H1 (cell line): ENCODE measurements at regions of chr12 and their contacts with region 1.

Region 1: GRCh38 chr12:52063981-52064649 is 5.7 kb upstream of the ATG101 start:
- DNase-seq: no peak
- H3K4me3 ChIP-seq: no peak overlapping the region
- H3K27ac ChIP-seq: no peak overlapping the region
- H3K4me1 ChIP-seq: peaks cover 0 to 2% (median 0%) of the 10 kb centered on the region in 4 experiments; a peak in 3 of 7 replicates
- H3K27me3 ChIP-seq: peaks cover 0 to 2% (median 0%) of the 10 kb centered on the region in 4 experiments; a peak in 2 of 7 replicates
- CTCF ChIP-seq: no peak
- EP300 ChIP-seq: no peak
- POLR2A ChIP-seq: no peak
- RAD21 ChIP-seq: no peak

Region 2: DNA sequence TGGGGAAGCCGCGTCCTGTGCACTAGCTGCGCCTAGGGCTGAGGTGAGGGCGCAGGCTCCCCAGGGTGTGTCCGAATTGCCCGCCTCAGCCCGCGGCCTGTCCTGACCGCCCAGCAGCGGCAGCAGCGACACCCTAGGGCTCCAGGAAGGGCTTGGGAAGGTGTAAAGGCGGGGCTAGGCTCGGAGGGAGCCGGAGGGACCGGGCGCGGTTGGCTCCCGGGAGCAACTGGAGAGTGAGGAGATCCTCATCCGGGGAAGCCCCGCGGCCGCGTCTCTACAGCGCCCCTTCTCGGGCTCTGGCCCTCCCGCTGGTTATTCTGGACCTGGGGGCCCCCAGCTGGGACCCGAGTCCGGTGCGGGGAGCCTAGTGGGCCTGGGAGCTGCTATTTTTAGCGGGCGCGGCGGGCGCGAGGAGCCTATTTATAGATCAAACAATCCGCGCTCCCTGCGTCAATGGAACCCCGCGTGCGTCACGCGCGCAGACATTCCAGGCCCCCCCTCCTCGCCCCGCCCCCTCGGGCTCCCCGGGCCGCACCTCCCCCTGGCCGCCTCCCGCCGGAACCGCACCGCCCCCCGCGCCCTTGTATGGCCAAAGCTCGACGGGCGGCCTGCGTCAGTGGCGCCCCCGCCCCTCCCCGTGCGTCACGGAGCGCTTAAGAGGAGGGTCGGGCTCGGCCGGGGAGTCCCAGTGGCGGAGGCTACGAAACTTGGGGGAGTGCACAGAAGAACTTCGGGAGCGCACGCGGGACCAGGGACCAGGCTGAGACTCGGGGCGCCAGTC is 13.2 kb before region 1 on chr12 and contains the start of gene NR4A1:
- CTCF ChIA-PET with region 1: interaction called, 56 read pairs
- POLR2A ChIA-PET with region 1: interaction called, 14 read pairs
- DNase-seq: peak in 1 of 2 experiments; percentile 87
- H3K4me3 ChIP-seq: peak within 1 kb of the TSS; percentile 44 to 72 (median 64)
- H3K27ac ChIP-seq: no peak within 1 kb of the TSS
- H3K4me1 ChIP-seq: peaks cover 0 to 19% (median 9%) of the 10 kb centered on the region in 4 experiments; a peak in 6 of 7 replicates
- H3K27me3 ChIP-seq: peaks cover 4 to 44% (median 36%) of the 10 kb centered on the region in 4 experiments
- CTCF ChIP-seq: no peak
- EP300 ChIP-seq: 0 out of 3 replicates have a peak, but pooled peaks of 1 of the 2 experiments have one; percentile 7
- POLR2A ChIP-seq: no peak; a peak in 1 of 3 replicates
- RAD21 ChIP-seq: no peak
- total RNA-seq, gene NR4A1: 18.7 and 19.3 TPM in 2 replicates

Region 3: GRCh38 chr12:52313926-52314325 is 249.8 kb after region 1 on chr12:
- CTCF ChIA-PET with region 1: no interaction called
- POLR2A ChIA-PET with region 1: no interaction called
- DNase-seq: no peak
- H3K4me3 ChIP-seq: no peak overlapping the region
- H3K27ac ChIP-seq: no peak overlapping the region
- H3K4me1 ChIP-seq: no peaks in the 10 kb centered on the region
- H3K27me3 ChIP-seq: peaks cover 5 to 19% (median 10%) of the 10 kb centered on the region in 4 experiments
- CTCF ChIP-seq: no peak
- EP300 ChIP-seq: no peak
- POLR2A ChIP-seq: no peak
- RAD21 ChIP-seq: no peak